Transverse colon (tissue), 4 donors: ENCODE measurements at regions of chr12 and their contacts with region 1.

Region 1: GRCh38 chr12:48165094-48165981 is 8.0 kb upstream of the ASB8 start:
- DNase-seq: no peak
- H3K4me3 ChIP-seq: no peak overlapping the region
- H3K27ac ChIP-seq: no peak overlapping the region
- H3K4me1 ChIP-seq: no peaks in the 10 kb centered on the region
- H3K27me3 ChIP-seq: no peaks in the 10 kb centered on the region
- CTCF ChIP-seq: peak; percentile 83 to 94 (median 88)
- EP300 ChIP-seq: no peak
- POLR2A ChIP-seq: no peak

Region 2: GRCh38 chr12:47949441-47950308 is 215.7 kb before region 1 on chr12:
- in situ Hi-C with region 1: loop called (anchors 10 to 25 kb)
- intact Hi-C with region 1: no loop called
- DNase-seq: peak; percentile 88
- H3K4me3 ChIP-seq: no peak overlapping the region
- H3K27ac ChIP-seq: peak overlapping the region; percentile 10 to 53 (median 24)
- H3K4me1 ChIP-seq: peaks cover 0 to 47% (median 31%) of the 10 kb centered on the region in 4 donors
- H3K27me3 ChIP-seq: no peaks in the 10 kb centered on the region
- CTCF ChIP-seq: peak; percentile 82 to 94 (median 85)
- EP300 ChIP-seq: no peak
- POLR2A ChIP-seq: no peak

Region 3: GRCh38 chr12:48105862-48106680 is 59.3 kb before region 1 on chr12 and contains the start of gene SENP1:
- in situ Hi-C with region 1: loop called in 1 of 4 experiments (anchors 10 kb)
- intact Hi-C with region 1: no loop called
- DNase-seq: peak; percentile 90
- H3K4me3 ChIP-seq: peak within 1 kb of the TSS; percentile 83 to 91 (median 87)
- H3K27ac ChIP-seq: peak within 1 kb of the TSS; percentile 90 to 94 (median 93)
- H3K4me1 ChIP-seq: peaks cover 8 to 21% (median 17%) of the 10 kb centered on the region in 4 donors
- H3K27me3 ChIP-seq: no peaks in the 10 kb centered on the region
- CTCF ChIP-seq: peak; percentile 23 to 77 (median 34)
- EP300 ChIP-seq: no peak
- POLR2A ChIP-seq: peak; percentile 38
- total RNA-seq, gene SENP1: 2.2 to 20.3 (median 10.5) TPM

Region 4: GRCh38 chr12:48890657-48891418 is 725.5 kb after region 1 on chr12:
- in situ Hi-C with region 1: no loop called
- intact Hi-C with region 1: no loop called
- DNase-seq: peak; percentile 82
- H3K4me3 ChIP-seq: peak overlapping the region in 2 of 4 donors; percentile 17 to 27
- H3K27ac ChIP-seq: no peak overlapping the region
- H3K4me1 ChIP-seq: peaks cover 0 to 9% (median 6%) of the 10 kb centered on the region in 4 donors
- H3K27me3 ChIP-seq: peaks cover 18% of the 10 kb centered on the region
- CTCF ChIP-seq: peak; percentile 86 to 95 (median 91)
- EP300 ChIP-seq: no peak
- POLR2A ChIP-seq: no peak